PC-3 (cell line): ENCODE measurements at regions of chr2 and their contacts with region 1.

Region 1: DNA sequence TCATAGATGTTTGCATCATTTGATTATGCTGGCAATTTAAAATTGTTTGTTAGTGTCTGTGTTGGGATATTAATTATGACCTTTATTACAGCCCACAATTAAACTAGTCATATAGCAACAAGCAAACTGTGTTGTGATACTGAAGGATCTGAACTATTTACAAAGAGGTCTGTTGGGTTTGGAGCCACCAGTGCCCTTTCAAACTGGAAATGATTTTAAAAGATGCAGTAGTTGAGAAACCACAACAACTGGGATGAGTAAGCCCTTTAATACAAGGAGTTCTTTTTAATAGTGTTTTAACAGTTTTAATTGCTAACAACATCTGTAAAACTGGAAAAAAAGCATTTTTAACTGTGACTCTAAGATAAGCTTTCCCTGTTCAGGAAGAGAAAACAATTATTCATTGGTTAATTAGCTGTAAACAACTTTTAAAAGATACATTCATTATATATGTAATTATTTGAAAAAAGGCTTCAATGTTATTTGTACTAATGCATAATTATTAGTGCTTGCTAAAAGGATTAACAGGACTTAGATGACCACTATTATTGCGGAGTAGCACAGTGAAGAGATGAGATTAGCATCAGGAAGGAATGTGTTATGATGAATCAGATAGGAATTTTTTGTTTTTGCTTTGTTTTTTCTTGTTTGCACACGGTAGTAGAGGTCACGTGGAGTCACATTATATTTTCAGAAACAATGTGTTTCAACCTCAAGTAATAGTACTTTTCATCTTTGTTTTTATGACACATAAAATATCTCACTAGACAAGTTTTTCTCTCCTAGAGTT is 392.6 kb upstream of the FANCL start:
- DNase-seq: peak; percentile 94
- ATAC-seq: peak; percentile 75
- H3K4me3 ChIP-seq: no peak overlapping the region
- H3K27ac ChIP-seq: peak overlapping the region; percentile 82
- H3K4me1 ChIP-seq: peaks cover 32% of the 10 kb centered on the region
- H3K27me3 ChIP-seq: no peaks in the 10 kb centered on the region
- CTCF ChIP-seq: no peak

Region 2: DNA sequence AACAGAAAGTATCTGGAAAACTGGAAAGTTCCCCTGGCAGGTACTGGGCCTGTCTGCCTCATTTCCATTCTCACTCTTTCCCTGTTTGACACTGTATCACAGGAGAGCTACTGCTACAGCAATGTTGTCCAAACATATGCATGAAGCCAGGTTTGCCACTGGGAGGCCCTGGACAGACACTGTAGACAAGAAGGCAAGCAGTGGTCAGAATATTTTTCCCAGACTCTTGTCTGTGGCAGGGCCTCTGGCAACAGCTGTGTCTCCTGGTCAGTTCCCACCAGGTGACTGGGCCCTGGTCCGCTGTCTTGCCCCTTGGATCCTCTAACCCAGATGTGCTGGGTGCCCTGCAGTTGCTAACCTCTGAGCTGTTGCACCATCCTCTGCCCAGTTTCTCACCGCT is 213.8 kb before region 1 on chr2:
- CTCF ChIA-PET with region 1: no interaction called
- POLR2A ChIA-PET with region 1: interaction called, 17 read pairs
- intact Hi-C with region 1: no loop called
- DNase-seq: no peak
- ATAC-seq: peak; percentile 33; the same call in 1 of the 2 replicates
- H3K4me3 ChIP-seq: no peak overlapping the region
- H3K27ac ChIP-seq: no peak overlapping the region
- H3K4me1 ChIP-seq: no peaks in the 10 kb centered on the region
- H3K27me3 ChIP-seq: no peaks in the 10 kb centered on the region
- CTCF ChIP-seq: no peak

Region 3: GRCh38 chr2:58553937-58554336 is 79.8 kb before region 1 on chr2:
- CTCF ChIA-PET with region 1: no interaction called
- POLR2A ChIA-PET with region 1: no interaction called
- intact Hi-C with region 1: no loop called
- DNase-seq: peak; percentile 51
- ATAC-seq: peak; percentile 57; the same call in 1 of the 2 replicates
- H3K4me3 ChIP-seq: no peak overlapping the region
- H3K27ac ChIP-seq: no peak overlapping the region
- H3K4me1 ChIP-seq: no peaks in the 10 kb centered on the region
- H3K27me3 ChIP-seq: no peaks in the 10 kb centered on the region
- CTCF ChIP-seq: peak; percentile 65

Region 4: GRCh38 chr2:58594175-58594574 is 39.6 kb before region 1 on chr2:
- CTCF ChIA-PET with region 1: interaction called, 4 read pairs
- POLR2A ChIA-PET with region 1: no interaction called
- intact Hi-C with region 1: loop called (anchors 1 kb)
- DNase-seq: peak; percentile 40
- ATAC-seq: no peak
- H3K4me3 ChIP-seq: no peak overlapping the region
- H3K27ac ChIP-seq: no peak overlapping the region
- H3K4me1 ChIP-seq: peaks cover 8% of the 10 kb centered on the region; the same call in 1 of the 2 replicates
- H3K27me3 ChIP-seq: no peaks in the 10 kb centered on the region
- CTCF ChIP-seq: peak; percentile 50

Region 5: DNA sequence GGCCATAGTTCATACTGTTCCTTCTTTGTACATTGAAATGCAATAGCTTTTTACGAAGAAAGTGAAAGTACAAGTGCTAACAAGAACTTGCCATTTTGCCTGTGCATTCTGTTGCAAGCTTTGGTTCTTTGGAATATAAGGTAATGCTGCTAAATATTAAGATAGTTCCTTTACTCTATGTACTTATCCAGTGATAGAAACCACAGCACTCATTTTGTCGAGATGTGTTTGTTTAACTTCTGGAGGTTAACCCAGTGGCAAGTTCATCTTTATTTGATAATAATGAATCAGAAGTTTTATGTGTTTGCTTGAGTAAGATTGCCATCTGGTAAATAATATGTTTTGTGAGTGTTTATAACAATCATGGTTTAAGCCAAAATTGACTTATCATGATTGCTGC is 19.5 kb before region 1 on chr2:
- CTCF ChIA-PET with region 1: interaction called, 3 read pairs
- POLR2A ChIA-PET with region 1: no interaction called
- intact Hi-C with region 1: loop called (anchors 1 kb)
- DNase-seq: peak; percentile 93
- ATAC-seq: peak; percentile 96
- H3K4me3 ChIP-seq: peak overlapping the region; percentile 53
- H3K27ac ChIP-seq: peak overlapping the region; percentile 50
- H3K4me1 ChIP-seq: peaks cover 35% of the 10 kb centered on the region
- H3K27me3 ChIP-seq: no peaks in the 10 kb centered on the region
- CTCF ChIP-seq: no peak

Region 6: GRCh38 chr2:58620093-58620492 is 13.7 kb before region 1 on chr2:
- CTCF ChIA-PET with region 1: no interaction called
- POLR2A ChIA-PET with region 1: no interaction called
- intact Hi-C with region 1: loop called (anchors 1 kb)
- DNase-seq: peak; percentile 87
- ATAC-seq: peak; percentile 95
- H3K4me3 ChIP-seq: peak overlapping the region; percentile 39; the same call in 1 of the 2 replicates
- H3K27ac ChIP-seq: peak overlapping the region; percentile 74
- H3K4me1 ChIP-seq: peaks cover 36% of the 10 kb centered on the region
- H3K27me3 ChIP-seq: no peaks in the 10 kb centered on the region
- CTCF ChIP-seq: no peak

Region 7: GRCh38 chr2:58680755-58681310 is 47.1 kb after region 1 on chr2:
- CTCF ChIA-PET with region 1: no interaction called
- POLR2A ChIA-PET with region 1: no interaction called
- intact Hi-C with region 1: loop called (anchors 5 kb)
- DNase-seq: peak; percentile 58
- ATAC-seq: peak; percentile 75
- H3K4me3 ChIP-seq: no peak overlapping the region
- H3K27ac ChIP-seq: no peak overlapping the region
- H3K4me1 ChIP-seq: no peaks in the 10 kb centered on the region
- H3K27me3 ChIP-seq: no peaks in the 10 kb centered on the region
- CTCF ChIP-seq: peak; percentile 69